Uterus (tissue), 4 donors: ENCODE measurements at regions of chr9 and their contacts with region 1.

Region 1: DNA sequence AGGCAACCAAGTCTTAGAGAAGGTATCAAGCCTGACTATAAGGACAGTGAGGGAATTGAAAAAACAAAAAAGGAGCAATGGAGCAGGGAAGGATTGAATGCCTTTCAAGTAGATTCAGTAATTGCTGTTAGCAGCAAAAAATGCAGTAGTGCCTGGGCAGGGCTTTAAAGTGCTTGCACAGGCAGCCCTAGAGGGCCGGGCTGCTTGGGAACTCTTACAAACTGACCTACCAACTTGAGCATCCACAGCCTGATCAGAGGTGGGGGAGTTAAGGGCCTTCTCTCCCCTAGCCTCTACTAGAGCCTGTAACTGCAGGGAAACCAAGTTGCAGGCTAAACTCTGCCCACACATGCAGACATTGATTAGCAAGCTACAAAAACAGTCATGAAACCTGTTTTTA is 19.4 kb downstream of the FXN start:
- DNase-seq: no peak
- H3K4me3 ChIP-seq: no peak overlapping the region
- H3K27ac ChIP-seq: no peak overlapping the region
- H3K4me1 ChIP-seq: no peaks in the 10 kb centered on the region
- H3K27me3 ChIP-seq: no peaks in the 10 kb centered on the region
- CTCF ChIP-seq: no peak
- POLR2A ChIP-seq: no peak

Region 2: GRCh38 chr9:68981789-68982188 is 73.2 kb before region 1 on chr9:
- intact Hi-C with region 1: no loop called
- DNase-seq: no peak
- H3K4me3 ChIP-seq: no peak overlapping the region
- H3K27ac ChIP-seq: no peak overlapping the region
- H3K4me1 ChIP-seq: peaks cover 0 to 6% of the 10 kb centered on the region in 2 donors
- H3K27me3 ChIP-seq: no peaks in the 10 kb centered on the region
- CTCF ChIP-seq: no peak
- POLR2A ChIP-seq: no peak

Region 3: DNA sequence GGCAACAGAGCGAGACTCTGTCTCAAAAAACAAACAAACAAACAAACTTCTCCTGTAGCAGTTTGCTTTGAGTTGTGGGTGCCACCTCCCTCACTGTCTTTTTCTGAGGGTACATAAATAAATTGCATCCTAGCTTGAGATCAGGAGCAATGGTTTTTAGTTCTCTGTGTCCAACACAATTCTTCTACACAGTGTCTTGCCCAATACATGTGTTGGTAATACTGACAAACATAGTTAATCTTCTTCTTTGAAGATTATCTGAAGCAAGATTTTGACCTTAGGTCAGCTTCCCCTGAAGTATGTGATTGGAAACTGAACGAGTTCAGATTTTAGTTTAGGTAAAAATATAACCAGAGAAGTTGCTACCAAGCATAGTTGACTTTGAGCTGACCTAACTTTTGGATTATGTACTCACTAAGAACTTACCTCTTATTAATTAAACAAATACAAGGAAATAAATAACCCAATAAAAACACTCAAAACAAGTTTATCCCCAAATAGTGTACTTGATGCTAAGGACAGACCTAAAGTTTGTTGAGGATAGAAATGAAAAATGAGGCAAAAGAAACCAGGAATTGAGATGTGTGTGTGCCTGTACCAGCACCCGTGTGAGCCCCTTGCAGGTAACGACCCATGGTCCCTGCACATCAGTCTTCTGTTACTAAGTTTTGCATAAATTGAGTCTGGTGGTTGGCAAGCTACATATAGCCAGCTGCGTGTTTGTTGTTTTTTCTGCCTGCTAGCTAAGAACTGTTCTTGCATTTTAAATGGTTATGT is 135.3 kb after region 1 on chr9:
- intact Hi-C with region 1: loop called (anchors 5 kb)
- DNase-seq: no peak
- H3K4me3 ChIP-seq: no peak overlapping the region
- H3K27ac ChIP-seq: no peak overlapping the region
- H3K4me1 ChIP-seq: peaks cover 0 to 6% of the 10 kb centered on the region in 2 donors
- H3K27me3 ChIP-seq: no peaks in the 10 kb centered on the region
- CTCF ChIP-seq: no peak
- POLR2A ChIP-seq: no peak